Mammary epithelial cell (primary cell): ENCODE measurements at regions of chr13 and their contacts with region 1.

Region 1: DNA sequence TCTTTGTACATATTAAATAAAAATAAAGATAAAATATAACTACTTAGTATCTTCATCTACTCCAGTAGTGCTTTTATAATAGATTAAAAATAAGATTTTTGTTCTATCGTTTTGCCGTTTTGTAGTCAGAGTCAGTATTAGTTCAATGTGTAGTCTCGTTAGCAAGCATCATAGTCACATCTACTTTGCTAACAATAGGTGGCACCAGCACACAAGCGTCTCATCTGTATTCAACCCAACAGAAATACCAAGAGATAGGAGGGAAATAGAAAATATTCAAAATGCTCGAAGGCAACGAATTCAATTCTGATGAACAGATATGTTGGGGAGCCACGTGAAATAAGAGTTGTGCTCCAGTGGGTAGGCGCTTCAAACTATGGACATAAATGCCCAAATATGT is 21.4 kb upstream of the MICU2 start:
- DNase-seq: peak; percentile 53
- H3K4me3 ChIP-seq: no peak overlapping the region
- H3K27ac ChIP-seq: no peak overlapping the region
- H3K4me1 ChIP-seq: peaks cover 3% of the 10 kb centered on the region
- H3K27me3 ChIP-seq: no peaks in the 10 kb centered on the region
- CTCF ChIP-seq: peak; percentile 59 to 76

Region 2: DNA sequence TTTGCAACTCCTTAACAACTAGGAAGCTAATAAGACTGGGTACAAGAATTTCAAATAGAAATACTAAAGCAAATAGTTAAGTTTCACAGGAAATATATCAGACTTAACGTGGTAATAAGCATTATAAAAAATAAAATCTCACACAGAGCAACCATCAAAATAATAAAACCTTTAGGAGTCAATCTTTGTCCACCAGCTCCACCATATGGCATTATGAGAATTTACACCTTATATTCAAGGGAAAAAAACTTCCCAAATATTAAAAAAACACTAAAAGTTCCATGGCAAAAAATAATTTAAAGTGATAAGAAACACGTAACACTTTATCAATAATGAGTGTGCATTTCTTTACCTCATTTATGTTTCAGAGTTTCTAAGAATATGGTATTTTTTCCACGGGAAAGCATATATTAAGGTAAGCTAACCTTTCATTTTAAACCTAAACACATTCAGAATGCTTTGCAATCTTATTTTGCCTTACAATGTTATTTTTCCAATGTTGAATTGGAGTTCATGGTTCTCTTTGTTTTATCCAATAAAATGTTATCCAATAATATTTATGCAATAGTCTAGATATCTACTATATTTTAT is 1132.3 kb after region 1 on chr13:
- CTCF ChIA-PET with region 1: no interaction called
- dilution Hi-C with region 1: no loop called
- in situ Hi-C with region 1: loop called in 1 of 2 experiments (anchors 25 kb)
- intact Hi-C with region 1: loop called (anchors 5 kb)
- DNase-seq: no peak
- H3K4me3 ChIP-seq: no peak overlapping the region
- H3K27ac ChIP-seq: no peak overlapping the region
- H3K4me1 ChIP-seq: no peaks in the 10 kb centered on the region
- H3K27me3 ChIP-seq: no peaks in the 10 kb centered on the region
- CTCF ChIP-seq: peak in 1 of 2 donors; percentile 15

Region 3: GRCh38 chr13:23321535-23322241 is 1696.3 kb after region 1 on chr13:
- CTCF ChIA-PET with region 1: no interaction called
- dilution Hi-C with region 1: no loop called
- in situ Hi-C with region 1: loop called in 1 of 2 experiments (anchors 10 kb)
- intact Hi-C with region 1: loop called (anchors 5 kb)
- DNase-seq: peak; percentile 86
- H3K4me3 ChIP-seq: peak overlapping the region in 2 of 3 experiments; percentile 15 to 24
- H3K27ac ChIP-seq: peak overlapping the region; percentile 79
- H3K4me1 ChIP-seq: peaks cover 30% of the 10 kb centered on the region
- H3K27me3 ChIP-seq: no peaks in the 10 kb centered on the region
- CTCF ChIP-seq: no peak

Region 4: GRCh38 chr13:23411706-23412105 is 1786.3 kb after region 1 on chr13:
- CTCF ChIA-PET with region 1: interaction called, 34 read pairs
- dilution Hi-C with region 1: no loop called
- in situ Hi-C with region 1: no loop called
- intact Hi-C with region 1: no loop called
- DNase-seq: no peak
- H3K4me3 ChIP-seq: no peak overlapping the region
- H3K27ac ChIP-seq: no peak overlapping the region
- H3K4me1 ChIP-seq: peaks cover 7% of the 10 kb centered on the region
- H3K27me3 ChIP-seq: no peaks in the 10 kb centered on the region
- CTCF ChIP-seq: no peak